ENCODE measurements at regions of chr18 and their contacts with region 1.

Region 1: DNA sequence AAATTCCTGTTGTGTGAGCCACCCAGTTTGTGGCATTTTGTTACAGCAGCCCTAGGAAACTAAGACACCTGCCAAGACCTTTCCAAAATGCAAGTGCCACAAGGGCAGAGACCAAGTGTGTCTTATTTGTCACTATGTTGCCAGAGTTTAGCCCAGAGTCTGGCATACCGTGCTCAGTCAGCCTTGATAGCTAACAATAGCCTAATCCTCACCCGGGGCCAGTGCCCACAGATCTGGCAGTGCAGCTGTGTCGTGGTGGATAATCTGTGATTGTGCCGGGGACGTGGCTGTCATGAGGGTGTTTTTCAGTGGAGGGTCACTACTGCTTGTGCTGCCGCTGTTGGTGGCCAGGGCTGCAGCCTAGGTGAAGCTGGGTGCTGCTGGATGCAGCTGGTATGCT is 53.5 kb downstream of the MEP1B start:
- DNase-seq: no peak
- ATAC-seq: no peak
- H3K4me3 ChIP-seq: no peak overlapping the region
- H3K4me3 Mint-ChIP-seq: no peak overlapping the region
- H3K27ac ChIP-seq: no peak overlapping the region
- H3K27ac Mint-ChIP-seq: no peak overlapping the region
- H3K4me1 ChIP-seq: no peaks in the 10 kb centered on the region
- H3K4me1 Mint-ChIP-seq: no peaks in the 10 kb centered on the region
- H3K27me3 ChIP-seq: no peaks in the 10 kb centered on the region
- H3K27me3 Mint-ChIP-seq: peaks cover 6 to 16% (median 11%) of the 10 kb centered on the region in 5 donors

Region 2: GRCh38 chr18:32183503-32183902 is 59.9 kb before region 1 on chr18:
- CTCF ChIA-PET with region 1: no interaction called
- POLR2A ChIA-PET with region 1: no interaction called
- intact Hi-C with region 1: no loop called
- DNase-seq: no peak
- ATAC-seq: no peak
- H3K4me3 ChIP-seq: no peak overlapping the region
- H3K4me3 Mint-ChIP-seq: no peak overlapping the region
- H3K27ac ChIP-seq: no peak overlapping the region
- H3K27ac Mint-ChIP-seq: no peak overlapping the region
- H3K4me1 ChIP-seq: no peaks in the 10 kb centered on the region
- H3K4me1 Mint-ChIP-seq: no peaks in the 10 kb centered on the region
- H3K27me3 ChIP-seq: no peaks in the 10 kb centered on the region
- H3K27me3 Mint-ChIP-seq: peaks cover 0 to 27% (median 18%) of the 10 kb centered on the region in 5 donors

Region 3: GRCh38 chr18:32195881-32196815 is 47.2 kb before region 1 on chr18:
- CTCF ChIA-PET with region 1: no interaction called
- POLR2A ChIA-PET with region 1: no interaction called
- intact Hi-C with region 1: loop called in 1 of 2 experiments (anchors 10 kb)
- DNase-seq: no peak
- ATAC-seq: no peak
- H3K4me3 ChIP-seq: no peak overlapping the region
- H3K4me3 Mint-ChIP-seq: no peak overlapping the region
- H3K27ac ChIP-seq: no peak overlapping the region
- H3K27ac Mint-ChIP-seq: no peak overlapping the region
- H3K4me1 ChIP-seq: no peaks in the 10 kb centered on the region
- H3K4me1 Mint-ChIP-seq: no peaks in the 10 kb centered on the region
- H3K27me3 ChIP-seq: no peaks in the 10 kb centered on the region
- H3K27me3 Mint-ChIP-seq: peaks cover 0 to 5% (median 3%) of the 10 kb centered on the region in 5 donors

Region 4: DNA sequence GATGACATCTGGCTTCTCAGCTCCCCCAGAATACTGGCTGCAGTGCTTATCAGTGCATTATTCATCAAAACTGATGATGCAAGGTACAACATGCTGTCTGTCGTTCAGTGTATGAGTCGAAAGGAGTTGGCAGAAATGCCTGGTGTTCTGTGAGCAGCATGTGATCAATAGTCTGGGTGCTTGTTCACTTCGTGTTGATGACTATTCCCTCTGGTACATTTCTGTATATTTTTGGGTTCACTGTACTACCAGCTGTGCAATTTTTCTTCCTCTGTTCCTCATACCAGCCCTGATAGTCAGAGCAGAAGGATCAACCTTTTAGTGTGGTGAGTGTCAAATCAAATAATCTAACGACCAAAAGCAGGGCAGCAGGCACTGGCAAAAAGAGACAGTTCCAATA is 588.4 kb after region 1 on chr18:
- CTCF ChIA-PET with region 1: no interaction called
- POLR2A ChIA-PET with region 1: no interaction called
- intact Hi-C with region 1: no loop called
- DNase-seq: no peak
- ATAC-seq: no peak
- H3K4me3 ChIP-seq: no peak overlapping the region
- H3K4me3 Mint-ChIP-seq: no peak overlapping the region
- H3K27ac ChIP-seq: no peak overlapping the region
- H3K27ac Mint-ChIP-seq: no peak overlapping the region
- H3K4me1 ChIP-seq: no peaks in the 10 kb centered on the region
- H3K4me1 Mint-ChIP-seq: no peaks in the 10 kb centered on the region
- H3K27me3 ChIP-seq: no peaks in the 10 kb centered on the region
- H3K27me3 Mint-ChIP-seq: peaks cover 0 to 4% (median 0%) of the 10 kb centered on the region in 5 donors